PC-3 (cell line): ENCODE measurements at regions of chr12 and their contacts with region 1.

Region 1: GRCh38 chr12:116599285-116600136 is 40.3 kb downstream of the MAP1LC3B2 start:
- DNase-seq: peak; percentile 91
- ATAC-seq: peak; percentile 84
- H3K4me3 ChIP-seq: peak overlapping the region; percentile 59
- H3K27ac ChIP-seq: peak overlapping the region; percentile 87
- H3K4me1 ChIP-seq: peaks cover 29% of the 10 kb centered on the region
- H3K27me3 ChIP-seq: no peaks in the 10 kb centered on the region
- CTCF ChIP-seq: peak; percentile 65

Region 2: GRCh38 chr12:115998119-115998633 is 601.3 kb before region 1 on chr12:
- CTCF ChIA-PET with region 1: no interaction called
- POLR2A ChIA-PET with region 1: no interaction called
- intact Hi-C with region 1: loop called (anchors 1 kb)
- DNase-seq: peak; percentile 81
- ATAC-seq: peak; percentile 66
- H3K4me3 ChIP-seq: no peak overlapping the region
- H3K27ac ChIP-seq: no peak overlapping the region
- H3K4me1 ChIP-seq: peaks cover 17% of the 10 kb centered on the region
- H3K27me3 ChIP-seq: no peaks in the 10 kb centered on the region
- CTCF ChIP-seq: peak; percentile 97

Region 3: DNA sequence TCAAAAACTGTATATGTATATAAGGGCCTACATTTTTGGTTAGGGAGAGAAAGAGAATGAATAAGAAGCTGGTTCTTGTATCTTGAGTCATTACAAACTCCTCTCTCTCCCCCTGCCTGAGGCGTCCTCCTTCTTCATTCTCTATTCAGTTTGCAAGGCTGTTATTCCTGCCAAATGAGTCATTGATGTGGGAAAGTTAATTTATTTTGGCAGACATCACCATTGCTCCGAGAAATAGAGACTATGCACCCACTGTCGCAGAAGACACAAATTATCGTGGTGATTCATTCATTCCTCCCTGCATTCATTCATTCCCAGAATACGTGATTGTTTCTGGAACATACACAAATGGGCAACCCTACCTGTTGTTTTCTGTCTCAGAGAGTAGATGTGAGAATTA is 209.5 kb before region 1 on chr12:
- CTCF ChIA-PET with region 1: no interaction called
- POLR2A ChIA-PET with region 1: no interaction called
- intact Hi-C with region 1: loop called (anchors 5 kb)
- DNase-seq: peak; percentile 100
- ATAC-seq: peak; percentile 84
- H3K4me3 ChIP-seq: no peak overlapping the region; the same call in 1 of the 2 replicates
- H3K27ac ChIP-seq: peak overlapping the region; percentile 95
- H3K4me1 ChIP-seq: peaks cover 37% of the 10 kb centered on the region
- H3K27me3 ChIP-seq: no peaks in the 10 kb centered on the region
- CTCF ChIP-seq: no peak

Region 4: GRCh38 chr12:116406516-116406915 is 193.0 kb before region 1 on chr12:
- CTCF ChIA-PET with region 1: interaction called, 3 read pairs
- POLR2A ChIA-PET with region 1: no interaction called
- intact Hi-C with region 1: loop called (anchors 1 kb)
- DNase-seq: peak; percentile 99
- ATAC-seq: peak; percentile 97
- H3K4me3 ChIP-seq: no peak overlapping the region
- H3K27ac ChIP-seq: peak overlapping the region; percentile 74
- H3K4me1 ChIP-seq: peaks cover 25% of the 10 kb centered on the region
- H3K27me3 ChIP-seq: no peaks in the 10 kb centered on the region
- CTCF ChIP-seq: peak; percentile 50

Region 5: GRCh38 chr12:116426391-116427136 is 172.9 kb before region 1 on chr12:
- CTCF ChIA-PET with region 1: no interaction called
- POLR2A ChIA-PET with region 1: no interaction called
- intact Hi-C with region 1: loop called (anchors 1 kb)
- DNase-seq: peak; percentile 99
- ATAC-seq: peak; percentile 95
- H3K4me3 ChIP-seq: no peak overlapping the region
- H3K27ac ChIP-seq: peak overlapping the region; percentile 76
- H3K4me1 ChIP-seq: peaks cover 29% of the 10 kb centered on the region
- H3K27me3 ChIP-seq: no peaks in the 10 kb centered on the region
- CTCF ChIP-seq: peak; percentile 71

Region 6: GRCh38 chr12:116455540-116456329 is 143.8 kb before region 1 on chr12:
- CTCF ChIA-PET with region 1: no interaction called
- POLR2A ChIA-PET with region 1: no interaction called
- intact Hi-C with region 1: loop called (anchors 1 kb)
- DNase-seq: peak; percentile 83
- ATAC-seq: peak; percentile 17
- H3K4me3 ChIP-seq: peak overlapping the region; percentile 21; the same call in 1 of the 2 replicates
- H3K27ac ChIP-seq: peak overlapping the region; percentile 98
- H3K4me1 ChIP-seq: peaks cover 38% of the 10 kb centered on the region
- H3K27me3 ChIP-seq: no peaks in the 10 kb centered on the region
- CTCF ChIP-seq: no peak

Region 7: GRCh38 chr12:116697305-116697704 is 97.8 kb after region 1 on chr12:
- CTCF ChIA-PET with region 1: no interaction called
- POLR2A ChIA-PET with region 1: no interaction called
- intact Hi-C with region 1: loop called (anchors 10 kb)
- DNase-seq: peak; percentile 58
- ATAC-seq: peak; percentile 75
- H3K4me3 ChIP-seq: no peak overlapping the region
- H3K27ac ChIP-seq: peak overlapping the region; percentile 36
- H3K4me1 ChIP-seq: peaks cover 19% of the 10 kb centered on the region
- H3K27me3 ChIP-seq: no peaks in the 10 kb centered on the region
- CTCF ChIP-seq: peak; percentile 64